ENCODE measurements at regions of chr22 and their contacts with region 1.

Region 1: GRCh38 chr22:25235547-25236290 is 16.3 kb downstream of the CRYBB2 start:
- DNase-seq: peak; percentile 89 to 92
- H3K4me3 ChIP-seq: peak overlapping the region; percentile 18
- H3K4me3 Mint-ChIP-seq: peak overlapping the region; percentile 44
- H3K27ac Mint-ChIP-seq: no peak overlapping the region
- H3K4me1 ChIP-seq: no peaks in the 10 kb centered on the region
- H3K4me1 Mint-ChIP-seq: no peaks in the 10 kb centered on the region
- H3K27me3 ChIP-seq: no peaks in the 10 kb centered on the region
- H3K27me3 Mint-ChIP-seq: peaks cover 11% of the 10 kb centered on the region
- CTCF ChIP-seq: peak; percentile 79 to 95

Region 2: GRCh38 chr22:25334162-25334490 is 98.4 kb after region 1 on chr22:
- CTCF ChIA-PET with region 1: no interaction called
- POLR2A ChIA-PET with region 1: no interaction called
- intact Hi-C with region 1: loop called (anchors 2 kb)
- DNase-seq: peak in 1 of 2 experiments; percentile 55
- H3K4me3 ChIP-seq: no peak overlapping the region
- H3K4me3 Mint-ChIP-seq: no peak overlapping the region
- H3K27ac Mint-ChIP-seq: no peak overlapping the region
- H3K4me1 ChIP-seq: no peaks in the 10 kb centered on the region
- H3K4me1 Mint-ChIP-seq: no peaks in the 10 kb centered on the region
- H3K27me3 ChIP-seq: no peaks in the 10 kb centered on the region
- H3K27me3 Mint-ChIP-seq: no peaks in the 10 kb centered on the region
- CTCF ChIP-seq: peak; percentile 13 to 42

Measured in Caco-2 (cell line).